ENCODE measurements at regions of chr21 and their contacts with region 1.

Region 1: GRCh38 chr21:25313829-25314228 is 293.5 kb downstream of the MRPL39 start:
- DNase-seq: no peak
- ATAC-seq: peak; percentile 40
- H3K4me3 Mint-ChIP-seq: peak overlapping the region; percentile 62
- H3K27ac Mint-ChIP-seq: peak overlapping the region; percentile 31
- H3K4me1 Mint-ChIP-seq: peaks cover 11% of the 10 kb centered on the region
- H3K27me3 Mint-ChIP-seq: no peaks in the 10 kb centered on the region
- CTCF ChIP-seq: peak; percentile 32

Region 2: GRCh38 chr21:24375201-24375600 is 938.6 kb before region 1 on chr21:
- CTCF ChIA-PET with region 1: no interaction called
- POLR2A ChIA-PET with region 1: no interaction called
- intact Hi-C with region 1: loop called (anchors 10 kb)
- DNase-seq: no peak
- ATAC-seq: peak; percentile 49
- H3K4me3 Mint-ChIP-seq: no peak overlapping the region
- H3K27ac Mint-ChIP-seq: no peak overlapping the region
- H3K4me1 Mint-ChIP-seq: no peaks in the 10 kb centered on the region
- H3K27me3 Mint-ChIP-seq: no peaks in the 10 kb centered on the region
- CTCF ChIP-seq: no peak

Region 3: DNA sequence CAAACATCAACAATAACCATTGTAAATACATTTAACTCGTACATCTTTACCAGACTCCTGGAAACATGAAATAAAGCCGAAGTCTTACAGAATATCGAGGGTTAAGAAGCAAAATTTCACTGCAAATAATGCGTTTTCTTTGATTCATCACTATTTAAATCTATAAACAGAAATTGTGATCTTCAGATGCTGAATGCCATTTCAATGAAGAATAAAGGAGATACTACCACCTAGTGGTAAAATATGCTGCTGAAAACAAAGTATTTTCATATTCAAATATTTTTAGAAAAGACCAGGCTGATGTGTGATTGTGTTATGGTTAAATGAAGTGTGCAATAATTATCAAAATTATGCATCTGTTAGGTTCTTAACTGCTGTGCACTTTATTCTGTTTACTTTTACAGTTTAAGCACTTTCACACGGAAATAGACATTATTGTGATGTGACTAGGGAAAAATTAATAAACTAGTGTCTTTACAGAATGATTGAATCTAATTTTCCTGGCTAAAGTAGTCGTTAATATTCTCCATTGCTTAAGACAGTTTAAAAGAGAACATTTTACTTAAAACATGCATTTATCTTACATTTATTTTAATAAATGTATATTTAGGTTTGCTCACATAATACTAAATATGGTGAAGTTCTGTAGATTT is 799.6 kb before region 1 on chr21:
- CTCF ChIA-PET with region 1: no interaction called
- POLR2A ChIA-PET with region 1: no interaction called
- intact Hi-C with region 1: loop called (anchors 1 kb)
- DNase-seq: no peak
- ATAC-seq: no peak
- H3K4me3 Mint-ChIP-seq: no peak overlapping the region
- H3K27ac Mint-ChIP-seq: no peak overlapping the region
- H3K4me1 Mint-ChIP-seq: no peaks in the 10 kb centered on the region
- H3K27me3 Mint-ChIP-seq: no peaks in the 10 kb centered on the region
- CTCF ChIP-seq: no peak

Region 4: DNA sequence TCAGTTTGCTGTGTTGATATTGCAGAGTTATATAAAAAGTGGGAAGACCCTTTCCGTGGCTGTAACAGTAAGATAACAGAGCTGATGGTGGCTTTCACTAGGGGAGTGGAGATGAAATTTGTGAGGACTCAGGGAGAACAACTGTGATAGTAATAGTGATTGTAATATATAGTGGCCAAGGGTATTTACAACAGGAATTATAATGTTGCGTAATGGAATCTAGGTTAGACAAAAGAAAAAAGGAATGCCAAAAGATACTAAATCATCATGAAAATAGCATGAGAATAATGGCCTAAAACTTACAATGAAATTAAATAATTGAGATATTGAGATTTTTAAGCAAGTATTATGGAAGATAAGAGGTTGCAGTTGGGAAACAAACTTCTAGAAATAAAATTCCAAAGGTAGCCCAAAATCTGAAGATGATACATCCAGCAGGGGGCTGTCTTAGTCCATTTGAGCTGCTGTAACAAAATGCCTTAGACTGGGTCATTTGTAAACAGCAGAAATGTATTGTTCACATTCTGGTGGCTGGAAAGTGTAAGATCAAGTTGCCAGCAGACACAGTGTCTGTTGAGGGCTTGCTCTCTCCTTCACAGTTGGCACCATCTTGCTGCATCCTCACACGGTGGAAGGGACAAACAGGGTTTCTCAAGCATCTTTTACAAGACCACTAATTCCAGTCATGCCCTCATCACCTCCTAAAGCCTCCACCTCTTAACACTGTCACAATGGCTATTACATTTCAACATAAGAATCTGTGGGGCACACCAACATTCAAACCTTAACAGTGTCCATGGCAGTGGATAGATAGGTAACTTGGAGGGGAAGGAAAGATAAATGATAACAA is 417.7 kb before region 1 on chr21:
- CTCF ChIA-PET with region 1: interaction called, 42 read pairs
- POLR2A ChIA-PET with region 1: no interaction called
- intact Hi-C with region 1: loop called (anchors 1 kb)
- DNase-seq: no peak
- ATAC-seq: peak; percentile 69
- H3K4me3 Mint-ChIP-seq: no peak overlapping the region
- H3K27ac Mint-ChIP-seq: peak overlapping the region; percentile 4
- H3K4me1 Mint-ChIP-seq: peaks cover 21% of the 10 kb centered on the region
- H3K27me3 Mint-ChIP-seq: no peaks in the 10 kb centered on the region
- CTCF ChIP-seq: no peak

Region 5: DNA sequence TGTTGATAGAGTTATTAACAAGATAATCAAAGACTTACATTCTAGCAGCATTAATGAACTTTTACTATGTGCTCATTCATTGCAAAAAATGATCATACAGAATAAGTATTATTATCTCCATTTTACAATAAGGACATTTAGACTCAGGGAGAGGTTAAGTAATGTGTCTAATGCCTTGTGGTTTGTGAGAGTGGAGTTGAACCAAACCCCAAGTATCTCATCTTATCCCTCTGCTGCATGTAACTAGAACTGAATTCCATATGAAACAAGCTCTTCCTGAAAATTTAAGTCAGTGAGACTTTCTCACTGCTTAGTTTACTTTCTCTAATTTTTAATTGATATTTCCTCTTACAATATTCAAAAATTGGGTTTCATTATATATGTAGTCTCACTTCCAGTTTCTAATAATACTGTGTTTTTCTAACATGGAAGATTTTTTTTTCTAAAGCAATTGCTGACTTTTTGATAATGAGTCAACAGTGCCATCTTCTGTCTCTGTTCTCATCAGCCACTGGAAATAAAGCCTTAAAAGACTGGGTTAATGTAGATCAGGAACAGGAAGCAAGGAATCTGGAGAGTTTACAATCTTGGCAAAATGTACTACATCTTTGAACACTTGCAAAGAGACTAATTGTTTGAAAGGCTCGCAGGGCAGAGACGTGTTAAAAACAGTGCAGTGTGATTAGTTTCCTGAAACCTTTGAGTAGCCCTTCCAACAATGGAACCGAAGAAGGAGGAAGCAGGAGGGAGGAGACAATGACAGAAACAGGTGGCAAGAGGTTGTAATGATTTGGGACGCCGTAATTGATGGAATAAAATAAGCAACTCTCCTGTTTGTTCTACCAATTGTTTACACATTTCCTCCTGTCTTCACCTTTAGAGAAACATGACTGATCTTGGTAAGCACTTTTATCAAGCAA is 274.1 kb before region 1 on chr21:
- CTCF ChIA-PET with region 1: interaction called, 3 read pairs
- POLR2A ChIA-PET with region 1: no interaction called
- intact Hi-C with region 1: loop called (anchors 1 kb)
- DNase-seq: no peak
- ATAC-seq: peak; percentile 64
- H3K4me3 Mint-ChIP-seq: peak overlapping the region; percentile 74
- H3K27ac Mint-ChIP-seq: peak overlapping the region; percentile 80
- H3K4me1 Mint-ChIP-seq: peaks cover 35% of the 10 kb centered on the region
- H3K27me3 Mint-ChIP-seq: no peaks in the 10 kb centered on the region
- CTCF ChIP-seq: no peak